ENCODE measurements at regions of chr1 and their contacts with region 1.

Region 1: DNA sequence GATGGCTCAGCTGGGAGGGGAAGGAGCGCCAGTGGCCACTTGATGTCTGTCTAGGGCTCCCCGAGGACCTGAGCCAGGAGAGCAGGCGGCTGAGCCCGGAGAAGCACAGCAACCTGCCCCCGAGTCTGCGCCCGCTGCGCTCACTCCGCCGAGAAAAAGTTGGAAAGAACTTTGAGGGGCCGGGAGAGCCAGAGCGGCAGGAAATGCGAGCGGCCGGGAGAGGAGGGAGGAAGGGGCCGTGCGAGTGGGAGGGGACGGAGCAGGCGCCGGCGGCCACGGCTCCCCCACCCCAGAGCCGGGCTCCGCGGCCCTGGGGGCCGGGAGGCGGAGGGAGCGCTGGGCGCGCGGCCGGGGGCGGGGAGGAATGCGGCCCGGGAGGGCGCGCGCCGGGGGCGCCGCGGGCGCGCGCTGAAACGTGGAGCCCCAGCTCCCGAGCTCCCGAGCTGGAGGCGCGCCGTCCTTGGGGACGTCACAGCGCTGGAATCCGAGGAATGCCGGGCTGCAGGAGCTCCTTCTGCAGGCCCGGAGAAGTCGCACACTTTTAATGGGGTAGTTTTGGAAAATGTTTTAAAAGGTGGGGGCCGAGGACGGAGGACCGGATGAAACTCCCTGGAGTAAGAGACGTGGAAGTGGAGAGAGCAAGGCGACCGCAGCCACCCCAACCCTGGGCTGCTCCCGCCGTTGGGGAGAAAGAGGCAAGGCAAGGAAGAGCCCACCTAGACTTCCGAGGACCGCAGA is at the start of gene PTPN14:
- DNase-seq: peak; percentile 93
- H3K4me3 ChIP-seq: peak within 1 kb of the TSS; percentile 31 to 88 (median 73)
- H3K27ac ChIP-seq: peak within 1 kb of the TSS; percentile 98
- H3K4me1 ChIP-seq: peaks cover 50% of the 10 kb centered on the region
- H3K27me3 ChIP-seq: no peaks in the 10 kb centered on the region
- CTCF ChIP-seq: peak; percentile 17 to 47
- POLR2A ChIP-seq: peak; percentile 97
- total RNA-seq, gene PTPN14: 88.9 and 93.0 TPM in 2 replicates

Region 2: GRCh38 chr1:214271174-214271858 is 280.3 kb before region 1 on chr1:
- CTCF ChIA-PET with region 1: no interaction called
- POLR2A ChIA-PET with region 1: no interaction called
- dilution Hi-C with region 1: no loop called
- intact Hi-C with region 1: no loop called
- DNase-seq: no peak
- H3K4me3 ChIP-seq: no peak overlapping the region
- H3K27ac ChIP-seq: no peak overlapping the region
- H3K4me1 ChIP-seq: no peaks in the 10 kb centered on the region
- H3K27me3 ChIP-seq: peaks cover 9 to 21% of the 10 kb centered on the region in 2 experiments
- CTCF ChIP-seq: no peak
- POLR2A ChIP-seq: no peak

Region 3: DNA sequence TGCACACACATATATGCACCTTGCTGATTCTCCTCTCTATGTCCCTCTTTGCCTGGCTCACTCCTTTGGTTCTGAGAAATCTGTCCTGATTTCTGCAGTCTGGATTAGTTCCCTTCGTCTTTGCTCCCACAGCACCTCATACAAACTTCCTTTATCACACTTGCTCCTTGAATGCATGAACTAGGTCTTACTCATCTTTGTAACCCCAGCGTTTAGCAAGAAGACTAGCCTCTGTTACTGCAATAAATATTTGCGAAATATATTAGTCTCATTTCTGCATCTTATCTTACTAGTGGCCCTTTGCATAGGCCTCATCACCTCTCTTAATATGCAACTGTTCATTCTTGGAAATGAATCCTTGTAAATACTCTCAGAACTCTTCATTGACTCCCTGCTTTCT is 259.3 kb before region 1 on chr1:
- CTCF ChIA-PET with region 1: no interaction called
- POLR2A ChIA-PET with region 1: no interaction called
- dilution Hi-C with region 1: no loop called
- intact Hi-C with region 1: no loop called
- DNase-seq: no peak
- H3K4me3 ChIP-seq: no peak overlapping the region
- H3K27ac ChIP-seq: no peak overlapping the region
- H3K4me1 ChIP-seq: peaks cover 28% of the 10 kb centered on the region
- H3K27me3 ChIP-seq: no peaks in the 10 kb centered on the region
- CTCF ChIP-seq: no peak
- POLR2A ChIP-seq: no peak

Region 4: GRCh38 chr1:214362188-214362882 is 189.3 kb before region 1 on chr1:
- CTCF ChIA-PET with region 1: no interaction called
- POLR2A ChIA-PET with region 1: no interaction called
- dilution Hi-C with region 1: no loop called
- intact Hi-C with region 1: loop called (anchors 1 kb)
- DNase-seq: peak; percentile 52
- H3K4me3 ChIP-seq: no peak overlapping the region
- H3K27ac ChIP-seq: peak overlapping the region; percentile 3
- H3K4me1 ChIP-seq: peaks cover 8% of the 10 kb centered on the region
- H3K27me3 ChIP-seq: no peaks in the 10 kb centered on the region
- CTCF ChIP-seq: no peak
- POLR2A ChIP-seq: no peak

Region 5: GRCh38 chr1:214404154-214404553 is 147.5 kb before region 1 on chr1:
- CTCF ChIA-PET with region 1: interaction called, 23 read pairs
- POLR2A ChIA-PET with region 1: interaction called, 22 read pairs
- dilution Hi-C with region 1: no loop called
- intact Hi-C with region 1: loop called (anchors 1 kb)
- DNase-seq: peak; percentile 90
- H3K4me3 ChIP-seq: peak overlapping the region in 1 of 3 experiments; percentile 39
- H3K27ac ChIP-seq: peak overlapping the region; percentile 99
- H3K4me1 ChIP-seq: peaks cover 35% of the 10 kb centered on the region
- H3K27me3 ChIP-seq: no peaks in the 10 kb centered on the region
- CTCF ChIP-seq: no peak
- POLR2A ChIP-seq: peak; percentile 53

Region 6: GRCh38 chr1:214446772-214447556 is 104.6 kb before region 1 on chr1:
- CTCF ChIA-PET with region 1: no interaction called
- POLR2A ChIA-PET with region 1: interaction called, 4 read pairs
- dilution Hi-C with region 1: no loop called
- intact Hi-C with region 1: loop called (anchors 1 kb)
- DNase-seq: peak; percentile 88
- H3K4me3 ChIP-seq: peak overlapping the region in 1 of 3 experiments; percentile 33
- H3K27ac ChIP-seq: peak overlapping the region; percentile 88
- H3K4me1 ChIP-seq: peaks cover 41% of the 10 kb centered on the region
- H3K27me3 ChIP-seq: no peaks in the 10 kb centered on the region
- CTCF ChIP-seq: no peak
- POLR2A ChIP-seq: peak; percentile 56

Region 7: GRCh38 chr1:214476958-214477870 is 74.4 kb before region 1 on chr1:
- CTCF ChIA-PET with region 1: interaction called, 3 read pairs
- POLR2A ChIA-PET with region 1: no interaction called
- dilution Hi-C with region 1: loop called (anchors 10 kb)
- intact Hi-C with region 1: loop called (anchors 2 kb)
- DNase-seq: peak; percentile 75
- H3K4me3 ChIP-seq: peak overlapping the region in 1 of 3 experiments; percentile 15
- H3K27ac ChIP-seq: peak overlapping the region; percentile 70
- H3K4me1 ChIP-seq: peaks cover 28% of the 10 kb centered on the region
- H3K27me3 ChIP-seq: no peaks in the 10 kb centered on the region
- CTCF ChIP-seq: no peak
- POLR2A ChIP-seq: no peak

Region 8: DNA sequence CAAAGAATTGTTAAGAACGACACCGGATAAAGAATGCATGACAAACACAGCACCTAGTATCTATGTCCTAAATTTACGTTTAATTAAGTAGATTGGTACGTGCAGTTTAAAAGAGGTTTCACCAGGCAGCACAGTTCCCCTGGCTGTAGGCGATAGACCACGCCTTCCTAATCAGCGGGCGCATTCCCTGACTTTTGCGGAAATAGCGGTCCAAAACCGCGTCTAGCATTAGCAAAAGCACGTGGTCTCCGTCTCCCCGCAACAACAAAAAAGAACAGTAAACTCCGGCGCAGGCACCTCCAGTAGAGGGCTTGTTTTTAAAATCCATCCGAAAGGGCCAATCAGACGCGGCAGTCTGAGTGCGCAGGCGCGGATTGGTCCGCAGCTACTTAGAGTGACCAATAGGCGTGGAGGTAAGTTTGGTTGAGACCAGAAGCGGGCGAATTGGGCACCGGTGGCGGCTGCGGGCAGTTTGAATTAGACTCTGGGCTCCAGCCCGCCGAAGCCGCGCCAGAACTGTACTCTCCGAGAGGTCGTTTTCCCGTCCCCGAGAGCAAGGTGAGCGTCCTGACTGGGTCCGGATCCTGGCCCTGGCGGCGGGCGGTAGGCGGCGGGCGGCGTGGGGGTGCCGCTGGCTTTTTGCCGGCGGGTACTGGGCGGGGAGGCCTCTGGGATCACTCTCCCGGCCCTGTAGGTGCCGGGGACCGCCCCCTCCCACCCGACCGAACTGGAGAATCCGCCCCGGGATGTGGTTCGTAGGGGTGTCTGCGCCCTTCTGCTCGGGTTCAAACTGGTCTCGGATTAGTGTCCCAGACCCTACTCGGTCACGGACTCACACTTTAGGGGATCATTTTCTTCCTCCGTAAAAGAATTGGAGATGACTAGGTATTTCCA is 51.4 kb after region 1 on chr1 and contains the start of gene CENPF:
- CTCF ChIA-PET with region 1: no interaction called
- POLR2A ChIA-PET with region 1: no interaction called
- dilution Hi-C with region 1: no loop called
- intact Hi-C with region 1: loop called (anchors 1 kb)
- DNase-seq: peak; percentile 99
- H3K4me3 ChIP-seq: peak within 1 kb of the TSS; percentile 80 to 93 (median 80)
- H3K27ac ChIP-seq: peak within 1 kb of the TSS; percentile 56
- H3K4me1 ChIP-seq: peaks cover 11% of the 10 kb centered on the region
- H3K27me3 ChIP-seq: no peaks in the 10 kb centered on the region
- CTCF ChIP-seq: peak in 1 of 2 donors; percentile 30
- POLR2A ChIP-seq: peak; percentile 59
- total RNA-seq, gene CENPF: 66.2 and 72.9 TPM in 2 replicates

Region 9: DNA sequence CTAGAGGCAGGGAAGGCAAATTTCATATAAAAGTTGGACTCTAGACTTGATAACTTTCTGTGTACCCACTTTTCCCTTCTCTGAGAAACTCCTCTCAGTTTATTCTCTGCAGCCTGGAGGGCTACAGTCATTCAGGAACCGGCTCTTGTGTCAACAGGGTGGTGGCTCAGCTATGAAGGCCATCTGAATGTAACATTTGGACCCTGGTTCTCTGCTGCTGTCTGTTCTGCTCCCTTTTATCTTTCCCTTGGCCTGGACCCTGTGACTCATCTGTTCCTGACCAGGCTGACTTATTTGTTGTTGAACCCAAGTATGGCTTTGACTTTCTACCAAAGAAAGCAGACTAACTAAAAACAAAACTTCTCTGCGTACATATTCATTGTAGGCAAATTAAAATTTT is 126.8 kb after region 1 on chr1:
- CTCF ChIA-PET with region 1: no interaction called
- POLR2A ChIA-PET with region 1: no interaction called
- dilution Hi-C with region 1: no loop called
- intact Hi-C with region 1: no loop called
- DNase-seq: peak; percentile 9
- H3K4me3 ChIP-seq: no peak overlapping the region
- H3K27ac ChIP-seq: no peak overlapping the region
- H3K4me1 ChIP-seq: peaks cover 4% of the 10 kb centered on the region
- H3K27me3 ChIP-seq: no peaks in the 10 kb centered on the region
- CTCF ChIP-seq: no peak
- POLR2A ChIP-seq: no peak

Region 10: DNA sequence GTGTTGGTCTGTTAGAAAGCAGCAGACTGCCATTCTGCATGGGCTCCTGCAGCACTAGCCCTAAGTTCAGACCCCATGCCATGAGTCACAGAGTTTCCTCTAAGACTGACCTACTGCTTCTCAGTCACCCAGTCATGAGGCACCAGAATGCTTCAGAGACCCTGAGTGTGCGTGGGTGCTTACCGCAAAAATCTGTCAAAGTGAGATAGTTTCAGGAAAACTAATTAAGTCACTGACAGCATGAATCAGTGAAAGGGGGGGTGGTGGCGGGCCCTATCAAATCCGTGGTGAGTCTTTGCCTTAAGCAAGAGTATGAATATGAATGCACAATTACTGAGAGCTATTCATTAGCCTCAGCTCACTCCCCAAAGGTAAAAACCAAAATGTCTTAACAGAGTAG is 1113.6 kb after region 1 on chr1:
- CTCF ChIA-PET with region 1: no interaction called
- POLR2A ChIA-PET with region 1: no interaction called
- dilution Hi-C with region 1: no loop called
- intact Hi-C with region 1: no loop called
- DNase-seq: no peak
- H3K4me3 ChIP-seq: no peak overlapping the region
- H3K27ac ChIP-seq: no peak overlapping the region
- H3K4me1 ChIP-seq: no peaks in the 10 kb centered on the region
- H3K27me3 ChIP-seq: no peaks in the 10 kb centered on the region
- CTCF ChIP-seq: no peak
- POLR2A ChIP-seq: no peak